Mammary epithelial cell (primary cell): ENCODE measurements at regions of chr15 and their contacts with region 1.

Region 1: DNA sequence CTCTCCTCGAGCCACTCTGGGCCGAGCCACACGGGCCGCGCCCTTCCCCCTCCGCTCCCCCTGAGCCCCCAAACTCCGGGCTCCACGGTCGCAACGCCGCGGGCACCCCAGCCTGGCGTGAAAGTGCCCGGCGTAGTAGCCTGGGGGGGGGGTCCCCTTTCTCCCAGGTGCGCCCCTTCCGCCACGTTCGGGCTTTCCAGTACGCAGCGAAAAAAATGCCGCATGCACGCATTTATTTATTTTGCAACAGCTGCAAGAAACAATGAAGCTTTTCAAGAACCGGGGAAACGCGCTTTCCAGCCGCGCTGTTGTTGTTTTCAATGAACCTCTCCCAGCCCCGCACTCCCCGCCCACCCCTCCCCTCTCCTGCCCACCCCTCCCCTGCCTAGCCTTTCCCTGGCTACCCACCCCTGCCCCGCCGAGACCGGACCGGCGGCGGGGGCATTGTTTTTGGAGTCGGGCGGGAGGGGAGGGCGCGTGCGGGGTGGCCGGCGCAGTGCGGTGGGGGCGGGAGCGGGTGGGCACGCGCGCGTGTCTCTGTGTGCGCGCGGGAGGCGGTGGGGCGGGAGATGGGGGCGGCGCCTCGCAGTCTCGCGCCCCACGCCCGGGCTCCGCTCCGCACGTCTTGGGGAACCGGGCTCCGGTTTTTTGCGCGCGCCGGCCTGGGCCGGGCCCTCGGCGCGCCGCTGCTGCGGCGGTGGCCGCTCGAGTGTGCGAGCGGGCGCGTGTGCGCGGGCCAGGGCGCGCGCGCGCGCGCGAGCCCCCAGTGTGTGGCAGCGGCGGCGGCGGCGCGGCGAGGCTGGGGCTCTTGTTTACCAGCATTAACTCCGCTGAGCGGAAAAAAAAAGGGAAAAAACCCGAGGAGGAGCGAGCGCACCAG is at the start of gene IGF1R:
- DNase-seq: peak; percentile 89
- H3K4me3 ChIP-seq: peak within 1 kb of the TSS; percentile 89 to 100 (median 98)
- H3K27ac ChIP-seq: peak within 1 kb of the TSS; percentile 91
- H3K4me1 ChIP-seq: peaks cover 13% of the 10 kb centered on the region
- H3K27me3 ChIP-seq: no peaks in the 10 kb centered on the region
- CTCF ChIP-seq: peak in 1 of 2 donors; percentile 4
- total RNA-seq, gene IGF1R: 42.3 to 60.3 TPM

Region 2: GRCh38 chr15:98442379-98442833 is 205.6 kb before region 1 on chr15:
- CTCF ChIA-PET with region 1: interaction called, 5 read pairs
- dilution Hi-C with region 1: no loop called
- in situ Hi-C with region 1: loop called in 1 of 2 experiments (anchors 10 kb)
- intact Hi-C with region 1: loop called (anchors 2 kb)
- DNase-seq: peak; percentile 86
- H3K4me3 ChIP-seq: no peak overlapping the region
- H3K27ac ChIP-seq: no peak overlapping the region
- H3K4me1 ChIP-seq: peaks cover 6% of the 10 kb centered on the region
- H3K27me3 ChIP-seq: no peaks in the 10 kb centered on the region
- CTCF ChIP-seq: peak; percentile 89 to 97

Region 3: DNA sequence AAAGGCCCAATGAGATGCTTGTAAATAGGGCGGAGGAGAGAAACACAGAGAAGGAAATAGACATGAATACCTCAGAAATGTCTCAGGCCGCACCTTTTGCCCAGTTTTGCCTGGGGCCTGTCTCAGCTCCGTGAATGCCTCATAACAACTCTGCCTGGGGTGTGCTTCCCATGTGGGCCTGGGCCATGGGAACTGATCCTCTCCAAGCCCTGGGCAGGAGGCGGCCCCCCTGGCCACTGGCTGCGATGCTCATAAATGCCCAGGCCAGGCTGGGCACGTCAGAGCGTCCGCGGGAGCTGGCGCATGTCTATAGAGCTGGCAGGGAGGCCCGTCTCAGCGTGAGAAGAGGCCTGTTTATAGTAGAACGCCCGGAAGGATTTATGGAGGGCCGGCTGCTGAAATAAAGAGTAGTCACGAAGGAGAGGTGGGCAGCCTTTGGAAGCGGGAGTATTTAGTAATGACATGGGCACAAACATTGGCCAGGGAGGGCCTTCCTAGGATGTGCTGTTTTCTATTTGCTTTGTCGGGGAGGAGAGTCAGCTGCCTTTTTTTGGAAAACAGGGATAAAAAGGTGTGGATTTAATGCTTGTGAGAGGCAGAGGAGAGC is 85.6 kb before region 1 on chr15:
- CTCF ChIA-PET with region 1: no interaction called
- dilution Hi-C with region 1: no loop called
- in situ Hi-C with region 1: no loop called
- intact Hi-C with region 1: loop called (anchors 5 kb)
- DNase-seq: peak; percentile 85
- H3K4me3 ChIP-seq: no peak overlapping the region
- H3K27ac ChIP-seq: peak overlapping the region; percentile 43
- H3K4me1 ChIP-seq: peaks cover 34% of the 10 kb centered on the region
- H3K27me3 ChIP-seq: no peaks in the 10 kb centered on the region
- CTCF ChIP-seq: no peak

Region 4: GRCh38 chr15:98658831-98659699 is 11.1 kb after region 1 on chr15:
- CTCF ChIA-PET with region 1: no interaction called
- dilution Hi-C with region 1: no loop called
- in situ Hi-C with region 1: no loop called
- intact Hi-C with region 1: loop called (anchors 1 kb)
- DNase-seq: peak; percentile 60
- H3K4me3 ChIP-seq: no peak overlapping the region
- H3K27ac ChIP-seq: no peak overlapping the region
- H3K4me1 ChIP-seq: peaks cover 49% of the 10 kb centered on the region
- H3K27me3 ChIP-seq: no peaks in the 10 kb centered on the region
- CTCF ChIP-seq: peak; percentile 91

Region 5: GRCh38 chr15:98853161-98853560 is 205.1 kb after region 1 on chr15:
- CTCF ChIA-PET with region 1: interaction called, 4 read pairs
- dilution Hi-C with region 1: no loop called
- in situ Hi-C with region 1: no loop called
- intact Hi-C with region 1: loop called (anchors 1 kb)
- DNase-seq: peak; percentile 90
- H3K4me3 ChIP-seq: peak overlapping the region; percentile 65 to 72 (median 70)
- H3K27ac ChIP-seq: peak overlapping the region; percentile 75
- H3K4me1 ChIP-seq: peaks cover 58% of the 10 kb centered on the region
- H3K27me3 ChIP-seq: no peaks in the 10 kb centered on the region
- CTCF ChIP-seq: no peak